ENCODE measurements at regions of chr22 and their contacts with region 1.

Region 1: DNA sequence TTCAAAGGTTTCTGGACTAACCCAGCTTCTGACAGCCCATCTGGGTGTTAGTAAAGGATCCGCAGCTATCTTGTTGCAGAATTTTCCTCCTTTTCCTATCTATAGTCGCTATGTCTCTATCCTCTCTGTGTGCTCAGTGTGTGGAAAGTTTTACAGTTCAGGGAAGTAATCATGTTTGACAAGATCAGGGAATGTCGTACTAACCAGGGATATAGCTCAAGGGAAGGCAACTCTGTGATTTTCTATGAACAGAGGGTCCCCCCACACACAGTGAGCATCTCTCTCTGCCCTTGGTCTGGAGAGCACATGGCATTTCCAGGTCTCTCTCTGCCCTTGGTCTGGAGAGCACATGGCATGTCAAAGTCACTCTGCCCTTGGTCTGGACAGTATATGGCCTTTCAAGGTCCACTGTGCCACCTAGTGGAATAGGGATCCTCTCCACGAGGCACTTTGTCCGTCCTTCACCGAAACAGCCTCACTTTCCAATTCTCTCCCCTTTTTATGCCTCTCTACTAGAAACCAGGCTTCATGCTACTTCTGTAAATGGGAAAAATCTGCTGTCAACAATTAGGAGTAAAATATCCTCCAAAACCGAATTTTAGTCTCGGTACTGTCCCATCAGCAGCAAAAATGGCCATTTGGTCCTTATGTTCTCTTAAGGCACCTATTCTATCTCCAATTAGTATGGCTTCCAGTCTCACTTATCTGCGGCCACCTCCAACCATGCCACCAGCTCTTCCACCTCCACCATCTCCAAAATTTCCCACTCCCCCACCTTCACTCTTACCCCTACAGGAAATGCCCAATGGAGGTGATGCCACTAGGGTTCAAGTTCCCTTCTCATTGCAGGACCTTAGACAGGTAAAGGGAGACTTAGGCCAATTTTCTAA is 88.7 kb downstream of the IGLL5 start:
- DNase-seq: peak in 3 of 4 experiments; percentile 40 to 69 (median 61)
- ATAC-seq: peak; percentile 86
- H3K4me3 ChIP-seq: no peak overlapping the region
- H3K27ac ChIP-seq: no peak overlapping the region
- H3K4me1 ChIP-seq: no peaks in the 10 kb centered on the region
- H3K27me3 ChIP-seq: peaks cover 0 to 4% of the 10 kb centered on the region in 2 experiments; a peak in 1 of 5 replicates
- CTCF ChIP-seq: no peak
- EP300 ChIP-seq: no peak
- POLR2A ChIP-seq: no peak
- RAD21 ChIP-seq: no peak

Region 2: DNA sequence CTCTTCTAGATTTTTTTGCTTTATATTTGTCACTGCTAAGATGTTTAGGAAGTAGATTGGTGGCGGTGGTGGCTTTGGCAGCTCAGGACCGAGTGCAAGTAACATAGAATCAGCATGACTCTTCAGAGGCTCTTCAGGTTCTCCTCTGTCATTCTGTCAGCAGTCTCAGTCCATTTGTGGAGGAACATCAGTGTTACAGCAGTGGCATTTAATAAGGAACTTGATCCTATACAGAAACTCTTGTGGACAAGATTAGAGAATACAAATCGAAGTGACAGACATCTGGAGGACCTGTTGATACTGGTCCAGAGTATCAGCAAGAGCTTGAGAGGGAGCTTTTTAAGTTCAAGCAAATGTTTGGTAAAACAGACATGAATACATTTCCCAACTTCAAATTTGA is 11.9 kb after region 1 on chr22:
- CTCF ChIA-PET with region 1: no interaction called
- POLR2A ChIA-PET with region 1: interaction called, 35 read pairs
- in situ Hi-C with region 1: no loop called
- intact Hi-C with region 1: no loop called
- DNase-seq: peak in 1 of 4 experiments; percentile 31
- ATAC-seq: peak; percentile 13; the same call in 2 of the 3 replicates
- H3K4me3 ChIP-seq: no peak overlapping the region
- H3K27ac ChIP-seq: no peak overlapping the region
- H3K4me1 ChIP-seq: no peaks in the 10 kb centered on the region
- H3K27me3 ChIP-seq: peaks cover 13 to 19% of the 10 kb centered on the region in 2 experiments; a peak in 3 of 5 replicates
- CTCF ChIP-seq: no peak
- EP300 ChIP-seq: no peak
- POLR2A ChIP-seq: no peak
- RAD21 ChIP-seq: no peak

Region 3: DNA sequence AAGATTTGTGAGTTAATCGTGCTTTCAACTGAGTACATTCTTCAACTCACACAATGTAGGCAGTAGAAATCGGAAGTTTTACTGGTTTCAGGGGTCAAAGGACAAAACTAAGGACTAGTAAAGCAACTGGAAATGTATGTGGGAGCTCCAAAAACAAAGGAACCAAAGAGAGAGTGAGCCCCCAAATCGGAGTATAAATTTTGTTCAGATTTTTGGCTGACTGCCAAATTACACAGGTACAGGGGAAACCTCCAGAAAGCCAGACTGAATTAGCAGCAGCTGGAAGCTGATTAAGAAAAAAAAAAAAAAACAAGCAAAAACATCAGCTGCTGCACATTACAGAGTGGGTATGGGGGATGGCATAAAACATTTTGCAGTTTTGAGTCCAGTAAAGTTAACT is 18.9 kb after region 1 on chr22:
- CTCF ChIA-PET with region 1: no interaction called
- POLR2A ChIA-PET with region 1: interaction called, 22 read pairs
- in situ Hi-C with region 1: no loop called
- intact Hi-C with region 1: no loop called
- DNase-seq: peak in 3 of 4 experiments; percentile 67 to 72 (median 71)
- ATAC-seq: no peak
- H3K4me3 ChIP-seq: no peak overlapping the region
- H3K27ac ChIP-seq: no peak overlapping the region
- H3K4me1 ChIP-seq: no peaks in the 10 kb centered on the region
- H3K27me3 ChIP-seq: peaks cover 0 to 5% of the 10 kb centered on the region in 2 experiments; a peak in 1 of 5 replicates
- CTCF ChIP-seq: no peak
- EP300 ChIP-seq: no peak
- POLR2A ChIP-seq: no peak
- RAD21 ChIP-seq: no peak

Region 4: DNA sequence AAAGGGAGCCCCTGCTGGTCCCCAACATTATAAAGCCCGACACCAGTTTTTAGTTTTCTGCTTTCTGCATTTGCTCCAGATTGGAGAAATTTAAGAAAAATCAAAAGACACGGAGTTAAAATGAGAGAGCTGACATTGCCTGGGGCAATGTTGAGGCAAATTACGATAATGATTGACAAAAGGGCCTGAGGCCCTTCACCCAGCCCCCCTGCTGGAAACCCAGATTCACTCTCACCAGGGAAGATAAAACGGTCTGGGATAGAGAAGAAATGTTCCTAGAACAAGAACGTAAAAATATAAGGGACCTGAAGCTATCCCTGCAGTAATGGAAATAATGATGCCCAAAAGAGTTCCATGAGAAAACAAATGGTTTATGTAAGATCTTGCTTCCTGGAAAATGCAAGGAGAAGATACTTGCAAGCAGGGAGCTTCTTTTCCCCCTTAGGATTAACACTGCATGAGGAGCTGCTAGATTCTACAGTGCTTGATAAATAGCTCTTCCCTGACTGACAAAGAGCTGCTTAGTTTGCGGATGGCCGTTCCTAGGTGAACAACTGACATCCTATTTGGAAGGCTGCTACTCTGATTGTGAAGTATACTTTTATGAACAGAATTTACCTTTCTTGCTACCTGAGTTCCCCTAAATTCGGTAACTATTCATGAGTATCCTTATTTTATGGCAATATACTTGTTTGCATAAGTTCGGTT is 53.4 kb after region 1 on chr22:
- CTCF ChIA-PET with region 1: no interaction called
- POLR2A ChIA-PET with region 1: interaction called, 14 read pairs
- in situ Hi-C with region 1: no loop called
- intact Hi-C with region 1: loop called (anchors 5 kb)
- DNase-seq: peak in 2 of 4 experiments; percentile 44 to 59
- ATAC-seq: no peak
- H3K4me3 ChIP-seq: no peak overlapping the region
- H3K27ac ChIP-seq: no peak overlapping the region
- H3K4me1 ChIP-seq: peaks cover 0 to 4% of the 10 kb centered on the region in 2 experiments; a peak in 2 of 5 replicates
- H3K27me3 ChIP-seq: peaks cover 38 to 41% of the 10 kb centered on the region in 2 experiments
- CTCF ChIP-seq: peak in 1 of 3 experiments; percentile 32; a peak in 2 of 6 replicates
- EP300 ChIP-seq: no peak
- POLR2A ChIP-seq: no peak
- RAD21 ChIP-seq: no peak